ENCODE measurements at regions of chr7 and their contacts with region 1.

Region 1: GRCh38 chr7:100469227-100470044 is 5.4 kb upstream of the SPACDR start:
- DNase-seq: peak; percentile 98
- H3K4me3 ChIP-seq: no peak overlapping the region; a peak in 1 of 4 replicates
- H3K27ac ChIP-seq: no peak overlapping the region; a peak in 1 of 4 replicates
- H3K4me1 ChIP-seq: peaks cover 3 to 15% of the 10 kb centered on the region in 2 experiments; a peak in 3 of 4 replicates
- H3K27me3 ChIP-seq: no peaks in the 10 kb centered on the region
- CTCF ChIP-seq: peak; percentile 98
- EP300 ChIP-seq: no peak
- RAD21 ChIP-seq: peak; percentile 97

Region 2: DNA sequence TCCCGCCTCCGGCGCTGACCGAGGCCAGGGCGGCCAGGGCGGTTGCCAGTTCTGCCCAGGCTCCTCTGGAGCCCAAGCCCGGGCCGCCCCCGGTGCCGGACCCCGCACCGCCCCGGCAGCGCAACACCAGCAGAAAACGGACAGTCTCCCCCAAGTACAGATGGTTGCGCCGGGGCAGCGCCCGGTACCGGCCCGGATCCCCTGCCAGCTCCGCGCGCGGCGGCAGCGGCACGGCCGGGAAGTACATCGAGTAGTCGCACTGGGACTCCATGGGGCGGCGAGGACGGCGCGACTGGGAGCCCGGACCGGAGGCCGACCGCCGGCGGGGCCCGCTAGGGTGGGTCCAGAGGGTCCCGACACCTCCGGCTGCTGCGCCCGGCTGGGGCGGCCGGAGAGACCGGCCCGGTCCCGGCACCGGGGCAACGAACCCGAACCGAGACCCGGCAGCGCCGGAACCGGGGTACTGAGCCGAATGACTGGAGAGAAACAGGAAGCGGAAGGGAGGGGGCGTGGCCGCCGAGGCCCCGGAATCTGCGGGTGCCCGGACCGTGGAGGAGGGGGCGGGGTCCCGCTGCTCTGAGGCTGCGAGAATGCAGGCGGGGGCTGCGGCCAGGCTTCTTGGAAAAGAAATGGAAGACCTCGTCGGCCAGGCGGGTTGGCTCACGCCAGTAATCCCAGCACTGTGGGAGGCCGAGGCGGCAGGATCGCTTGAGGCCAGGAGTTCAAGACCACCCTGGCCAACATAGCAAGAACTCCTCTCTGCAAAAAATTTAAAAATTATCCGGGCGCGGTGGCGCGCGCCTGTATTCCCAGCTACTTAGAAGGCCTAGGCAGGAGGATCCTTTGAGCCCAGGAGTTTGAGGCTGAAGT is 311.0 kb before region 1 on chr7 and contains the start of gene TRAPPC14:
- CTCF ChIA-PET with region 1: no interaction called
- POLR2A ChIA-PET with region 1: no interaction called
- DNase-seq: peak; percentile 100
- H3K4me3 ChIP-seq: peak within 1 kb of the TSS; percentile 87 to 93
- H3K27ac ChIP-seq: peak within 1 kb of the TSS; percentile 36 to 62
- H3K4me1 ChIP-seq: peaks cover 11 to 19% of the 10 kb centered on the region in 2 experiments; a peak in 2 of 4 replicates
- H3K27me3 ChIP-seq: no peaks in the 10 kb centered on the region
- CTCF ChIP-seq: no peak
- EP300 ChIP-seq: peak in 1 of 2 experiments; percentile 30; a peak in 1 of 4 replicates
- RAD21 ChIP-seq: no peak
- polyA plus RNA-seq, gene TRAPPC14: 13.9 and 16.4 TPM in 2 replicates

Region 3: GRCh38 chr7:100446040-100446439 is 23.4 kb before region 1 on chr7:
- CTCF ChIA-PET with region 1: interaction called, 41 read pairs
- POLR2A ChIA-PET with region 1: no interaction called
- DNase-seq: no peak
- H3K4me3 ChIP-seq: no peak overlapping the region
- H3K27ac ChIP-seq: peak overlapping the region in 1 of 2 experiments; percentile 36; a peak in 2 of 4 replicates
- H3K4me1 ChIP-seq: peaks cover 2 to 4% of the 10 kb centered on the region in 2 experiments; a peak in 2 of 4 replicates
- H3K27me3 ChIP-seq: no peaks in the 10 kb centered on the region
- CTCF ChIP-seq: no peak
- EP300 ChIP-seq: no peak
- RAD21 ChIP-seq: no peak

Region 4: GRCh38 chr7:100496509-100496908 is 27.1 kb after region 1 on chr7:
- CTCF ChIA-PET with region 1: interaction called, 13 read pairs
- POLR2A ChIA-PET with region 1: no interaction called
- DNase-seq: no peak
- H3K4me3 ChIP-seq: no peak overlapping the region
- H3K27ac ChIP-seq: no peak overlapping the region
- H3K4me1 ChIP-seq: no peaks in the 10 kb centered on the region
- H3K27me3 ChIP-seq: no peaks in the 10 kb centered on the region
- CTCF ChIP-seq: no peak
- EP300 ChIP-seq: no peak
- RAD21 ChIP-seq: no peak

Region 5: GRCh38 chr7:100545360-100546128 is 76.1 kb after region 1 on chr7:
- CTCF ChIA-PET with region 1: interaction called, 15 read pairs
- POLR2A ChIA-PET with region 1: interaction called, 3 read pairs
- DNase-seq: peak; percentile 74
- H3K4me3 ChIP-seq: peak overlapping the region in 1 of 2 experiments; percentile 18; a peak in 1 of 4 replicates
- H3K27ac ChIP-seq: peak overlapping the region; percentile 89
- H3K4me1 ChIP-seq: peaks cover 40 to 41% of the 10 kb centered on the region in 2 experiments
- H3K27me3 ChIP-seq: no peaks in the 10 kb centered on the region
- CTCF ChIP-seq: peak; percentile 42
- EP300 ChIP-seq: peak in 1 of 2 experiments; percentile 79; a peak in 1 of 4 replicates
- RAD21 ChIP-seq: peak; percentile 1; the same call in 1 of the 2 replicates

Region 6: GRCh38 chr7:100563809-100564400 is 94.5 kb after region 1 on chr7:
- CTCF ChIA-PET with region 1: interaction called, 398 read pairs
- POLR2A ChIA-PET with region 1: no interaction called
- DNase-seq: peak; percentile 95
- H3K4me3 ChIP-seq: no peak overlapping the region; a peak in 1 of 4 replicates
- H3K27ac ChIP-seq: no peak overlapping the region; a peak in 1 of 4 replicates
- H3K4me1 ChIP-seq: peaks cover 0 to 24% of the 10 kb centered on the region in 2 experiments; a peak in 1 of 4 replicates
- H3K27me3 ChIP-seq: no peaks in the 10 kb centered on the region
- CTCF ChIP-seq: peak; percentile 98
- EP300 ChIP-seq: no peak
- RAD21 ChIP-seq: peak; percentile 84

Region 7: GRCh38 chr7:100604028-100604975 is 134.9 kb after region 1 on chr7:
- CTCF ChIA-PET with region 1: interaction called, 10 read pairs
- POLR2A ChIA-PET with region 1: no interaction called
- DNase-seq: peak; percentile 98
- H3K4me3 ChIP-seq: peak overlapping the region; percentile 67 to 76
- H3K27ac ChIP-seq: peak overlapping the region; percentile 69 to 97
- H3K4me1 ChIP-seq: peaks cover 10 to 25% of the 10 kb centered on the region in 2 experiments; a peak in 3 of 4 replicates
- H3K27me3 ChIP-seq: no peaks in the 10 kb centered on the region
- CTCF ChIP-seq: peak; percentile 59
- EP300 ChIP-seq: peak in 1 of 2 experiments; percentile 39; a peak in 1 of 4 replicates
- RAD21 ChIP-seq: no peak